ENCODE measurements at regions of chr9 and their contacts with region 1.

Region 1: GRCh38 chr9:76269818-76270217 is 124.4 kb downstream of the RFK start:
- DNase-seq: no peak
- H3K4me3 ChIP-seq: no peak overlapping the region
- H3K27ac ChIP-seq: no peak overlapping the region
- H3K27me3 ChIP-seq: no peaks in the 10 kb centered on the region
- CTCF ChIP-seq: no peak

Region 2: DNA sequence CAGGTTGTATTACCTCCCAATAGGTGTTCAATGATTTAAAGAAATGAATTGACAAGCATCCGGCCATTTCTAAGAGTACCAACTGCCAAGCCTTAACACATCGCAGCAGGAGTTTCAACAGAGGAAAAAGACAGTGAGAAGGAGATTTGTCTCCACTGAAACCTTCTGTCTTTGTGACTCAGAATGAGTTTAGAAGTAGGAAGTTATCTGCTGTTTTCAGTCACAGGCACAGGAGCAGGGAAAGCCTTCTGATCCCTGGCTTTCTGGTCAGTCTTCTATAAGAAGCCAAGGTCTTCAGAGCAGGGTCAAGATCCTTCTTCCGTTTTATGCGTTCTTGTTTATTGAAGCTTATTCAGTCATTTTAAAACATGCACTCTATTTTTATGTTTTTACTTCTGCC is 770.0 kb before region 1 on chr9:
- intact Hi-C with region 1: no loop called
- DNase-seq: no peak
- H3K4me3 ChIP-seq: no peak overlapping the region
- H3K27ac ChIP-seq: no peak overlapping the region
- H3K27me3 ChIP-seq: no peaks in the 10 kb centered on the region
- CTCF ChIP-seq: no peak

Region 3: DNA sequence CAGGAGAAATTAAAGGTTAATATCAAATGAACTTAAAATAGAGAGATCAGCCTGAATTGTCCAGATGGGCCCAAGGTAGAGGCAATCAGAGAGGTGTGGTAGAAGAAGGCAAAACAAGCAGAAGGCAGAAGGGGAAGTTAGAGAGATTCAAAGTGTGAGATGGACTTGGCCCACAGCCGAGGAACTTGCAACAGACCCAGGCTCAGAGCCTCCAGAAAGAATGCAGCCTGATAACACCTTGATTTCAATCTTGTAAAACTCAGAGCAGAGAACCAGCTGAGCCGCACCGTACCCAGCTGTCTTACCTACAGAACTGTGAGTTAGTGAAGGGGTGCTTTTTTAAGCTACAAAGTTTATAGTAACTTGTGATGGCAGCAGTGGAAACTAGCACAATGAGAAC is 66.4 kb before region 1 on chr9:
- intact Hi-C with region 1: loop called in 1 of 2 experiments (anchors 10 kb)
- DNase-seq: no peak
- H3K4me3 ChIP-seq: no peak overlapping the region
- H3K27ac ChIP-seq: no peak overlapping the region
- H3K27me3 ChIP-seq: peaks cover 0 to 9% (median 0%) of the 10 kb centered on the region in 45 donors
- CTCF ChIP-seq: no peak

Region 4: GRCh38 chr9:76419782-76420380 is 150.1 kb after region 1 on chr9:
- intact Hi-C with region 1: no loop called
- DNase-seq: no peak
- H3K4me3 ChIP-seq: no peak overlapping the region
- H3K27ac ChIP-seq: no peak overlapping the region
- H3K27me3 ChIP-seq: peaks cover 0 to 2% (median 0%) of the 10 kb centered on the region in 45 donors
- CTCF ChIP-seq: peak in 51 of 56 donors; percentile 11 to 61 (median 40)